ENCODE measurements at regions of chr1 and their contacts with region 1.

Region 1: DNA sequence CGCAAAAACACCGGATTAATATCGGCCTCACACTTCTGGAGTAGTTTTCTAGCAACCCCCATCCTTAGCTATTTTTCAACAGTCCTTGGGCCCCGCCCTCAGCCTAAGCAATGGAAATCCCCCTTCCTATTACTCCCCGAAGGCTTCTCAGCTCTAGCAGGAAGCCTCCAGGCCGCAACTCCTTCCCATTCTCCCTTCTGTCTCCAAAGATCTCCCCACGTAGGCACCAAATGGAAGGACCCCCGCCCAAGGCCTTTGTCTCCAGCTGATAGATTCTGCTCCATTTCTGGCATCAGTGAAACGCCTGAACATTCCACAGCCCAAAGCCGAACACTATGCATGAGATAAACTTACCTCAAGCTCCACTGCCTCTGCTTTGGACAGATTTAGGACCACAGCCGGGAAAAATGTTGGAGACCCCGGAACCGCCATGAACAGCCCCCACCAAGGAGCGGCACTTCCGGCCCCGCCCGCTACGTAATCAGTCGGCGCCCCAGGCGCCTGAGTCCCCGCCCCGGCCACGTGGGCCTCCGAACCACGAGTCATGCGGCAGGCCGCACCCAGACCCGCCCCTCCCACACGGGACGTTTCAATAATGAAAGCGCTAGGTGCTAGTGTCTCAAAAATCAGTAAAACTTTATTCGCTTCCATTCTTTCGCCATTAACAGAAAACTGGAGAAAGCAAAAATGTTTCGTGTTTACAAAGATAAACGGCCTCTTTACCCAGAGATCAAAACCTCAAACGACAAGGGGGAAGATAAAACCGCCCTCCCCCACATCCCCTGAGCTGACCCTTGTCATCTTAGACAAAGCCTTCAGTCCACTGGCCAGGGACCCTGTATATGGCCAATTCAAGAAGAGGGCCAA is at the start of gene NRAS:
- DNase-seq: peak; percentile 89
- H3K4me3 Mint-ChIP-seq: peak within 1 kb of the TSS; percentile 99
- H3K27ac Mint-ChIP-seq: peak within 1 kb of the TSS; percentile 100
- H3K4me1 Mint-ChIP-seq: peaks cover 8% of the 10 kb centered on the region
- H3K27me3 Mint-ChIP-seq: no peaks in the 10 kb centered on the region
- CTCF ChIP-seq: no peak
- total RNA-seq, gene NRAS: 38.9 and 41.4 TPM in 2 replicates

Region 2: GRCh38 chr1:114581335-114582287 is 134.9 kb before region 1 on chr1 and contains the start of gene BCAS2:
- CTCF ChIA-PET with region 1: interaction called, 3 read pairs
- POLR2A ChIA-PET with region 1: interaction called, 10 read pairs
- intact Hi-C with region 1: no loop called
- DNase-seq: peak; percentile 98
- H3K4me3 Mint-ChIP-seq: peak within 1 kb of the TSS; percentile 98
- H3K27ac Mint-ChIP-seq: peak within 1 kb of the TSS; percentile 99
- H3K4me1 Mint-ChIP-seq: peaks cover 6% of the 10 kb centered on the region
- H3K27me3 Mint-ChIP-seq: no peaks in the 10 kb centered on the region
- CTCF ChIP-seq: no peak
- total RNA-seq, gene BCAS2: 85.4 and 97.2 TPM in 2 replicates

Region 3: DNA sequence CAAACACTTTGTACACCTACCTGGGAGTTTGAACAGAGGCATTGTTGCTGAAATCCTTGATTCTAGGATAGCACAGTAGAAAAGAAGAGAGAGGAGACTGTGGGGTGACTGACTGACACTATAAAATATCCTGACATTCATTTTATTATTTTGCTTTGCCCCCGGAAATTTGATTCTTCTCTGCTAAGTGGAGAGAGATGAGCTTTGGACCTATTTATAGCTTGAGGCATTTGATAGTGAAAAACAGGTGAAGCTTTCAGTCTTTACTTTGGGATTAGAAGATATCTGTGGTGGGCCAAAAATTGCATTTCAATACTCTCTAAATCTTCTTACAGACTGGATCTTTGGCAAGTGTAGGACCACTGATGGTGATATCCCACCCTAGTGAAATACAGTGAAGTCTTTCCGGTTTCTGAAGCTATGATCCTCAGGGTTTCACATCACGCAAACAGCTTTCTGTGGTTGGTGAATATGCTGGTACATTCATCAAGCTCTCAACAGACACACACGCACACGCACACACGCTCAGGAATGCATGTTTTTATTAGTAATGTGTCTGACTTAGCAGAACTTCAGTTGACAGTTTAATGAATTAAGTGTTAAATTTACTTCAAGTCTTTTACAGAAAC is 21.0 kb before region 1 on chr1 and contains the start of gene AMPD1:
- CTCF ChIA-PET with region 1: interaction called, 3 read pairs
- POLR2A ChIA-PET with region 1: interaction called, 18 read pairs
- intact Hi-C with region 1: no loop called
- DNase-seq: no peak
- H3K4me3 Mint-ChIP-seq: no peak within 1 kb of the TSS
- H3K27ac Mint-ChIP-seq: no peak within 1 kb of the TSS
- H3K4me1 Mint-ChIP-seq: no peaks in the 10 kb centered on the region
- H3K27me3 Mint-ChIP-seq: no peaks in the 10 kb centered on the region
- CTCF ChIP-seq: no peak
- total RNA-seq, gene AMPD1: not detected in 2 replicates

Region 4: GRCh38 chr1:114703242-114703641 is 13.3 kb before region 1 on chr1:
- CTCF ChIA-PET with region 1: interaction called, 4 read pairs
- POLR2A ChIA-PET with region 1: interaction called, 13 read pairs
- intact Hi-C with region 1: no loop called
- DNase-seq: no peak
- H3K4me3 Mint-ChIP-seq: no peak overlapping the region
- H3K27ac Mint-ChIP-seq: no peak overlapping the region
- H3K4me1 Mint-ChIP-seq: no peaks in the 10 kb centered on the region
- H3K27me3 Mint-ChIP-seq: no peaks in the 10 kb centered on the region
- CTCF ChIP-seq: no peak

Region 5: DNA sequence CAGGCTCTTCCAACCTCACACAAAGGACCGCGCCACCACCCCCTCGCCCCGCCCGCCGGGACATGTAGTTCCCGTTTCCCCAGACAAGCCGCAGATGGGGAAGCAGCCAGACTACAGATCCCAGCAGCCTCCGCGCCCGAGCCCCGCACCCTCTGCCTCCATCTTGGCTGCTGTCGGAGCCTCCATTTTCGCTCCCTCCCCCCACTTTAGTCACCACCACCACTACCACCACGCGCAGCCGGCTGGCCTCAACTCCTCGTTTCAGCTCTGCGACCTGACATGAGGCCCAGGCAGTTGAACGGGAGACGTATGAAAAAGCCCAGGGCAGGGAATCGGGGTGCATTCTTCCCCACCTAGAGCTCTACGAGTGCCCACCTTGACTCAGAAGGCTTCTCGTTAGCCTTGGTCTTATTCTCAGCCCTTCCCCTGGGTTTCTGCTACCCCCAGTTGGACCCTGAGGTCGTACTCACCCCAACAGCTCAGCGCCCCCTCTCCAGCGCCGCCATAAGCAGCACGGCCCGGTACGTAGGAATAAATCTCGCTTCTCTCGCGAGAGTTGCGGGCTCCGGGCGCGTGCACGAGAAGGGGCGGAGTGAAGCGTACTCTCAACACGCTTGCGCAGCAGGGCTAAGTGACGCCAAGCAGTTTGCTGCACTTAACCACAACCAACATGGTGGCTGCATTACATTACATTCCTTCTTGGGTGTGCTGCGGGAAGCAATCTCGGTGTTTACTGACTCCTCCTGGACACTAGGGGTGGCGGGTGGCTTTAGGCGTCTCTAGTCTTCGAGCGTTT is 41.1 kb after region 1 on chr1 and contains the start of gene CSDE1:
- CTCF ChIA-PET with region 1: no interaction called
- POLR2A ChIA-PET with region 1: interaction called, 43 read pairs
- intact Hi-C with region 1: loop called (anchors 2 kb)
- DNase-seq: peak; percentile 98
- H3K4me3 Mint-ChIP-seq: peak within 1 kb of the TSS; percentile 97
- H3K27ac Mint-ChIP-seq: peak within 1 kb of the TSS; percentile 100
- H3K4me1 Mint-ChIP-seq: peaks cover 29% of the 10 kb centered on the region
- H3K27me3 Mint-ChIP-seq: no peaks in the 10 kb centered on the region
- CTCF ChIP-seq: no peak
- total RNA-seq, gene CSDE1: 535 and 580 TPM in 2 replicates